ENCODE measurements at regions of chr1 and their contacts with region 1.

Region 1: DNA sequence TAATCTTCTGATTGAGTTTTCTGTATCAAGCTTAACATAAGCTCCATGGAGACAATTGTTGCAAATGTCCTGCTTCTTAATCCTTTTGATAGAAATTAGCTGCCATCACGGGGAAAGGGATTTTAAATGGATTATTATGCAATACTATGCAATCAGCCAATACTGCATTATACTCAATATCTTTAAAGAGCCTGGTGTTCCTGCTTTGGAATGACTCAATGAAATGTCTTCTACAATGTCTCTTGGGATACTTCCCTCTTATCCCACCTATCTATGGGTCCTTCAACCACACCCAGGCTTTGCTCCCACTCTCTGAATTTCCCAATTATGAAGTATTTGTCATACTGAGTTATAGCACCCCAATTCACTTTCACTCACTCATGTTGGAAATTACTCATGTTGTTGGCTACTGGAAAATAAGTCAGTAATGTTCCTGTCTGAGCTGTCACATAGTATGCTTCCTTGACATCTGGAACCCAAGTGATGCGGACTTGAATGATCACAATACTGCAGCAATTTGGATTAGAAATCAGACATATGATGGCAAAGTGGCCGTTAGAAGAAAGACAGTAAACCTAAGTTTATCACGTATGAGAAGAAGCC is 85.0 kb downstream of the TPR start:
- DNase-seq: peak; percentile 55
- H3K4me3 Mint-ChIP-seq: peak overlapping the region; percentile 43
- H3K27ac Mint-ChIP-seq: peak overlapping the region; percentile 99
- H3K4me1 Mint-ChIP-seq: peaks cover 90% of the 10 kb centered on the region
- H3K27me3 Mint-ChIP-seq: no peaks in the 10 kb centered on the region

Region 2: GRCh38 chr1:186009039-186009737 is 280.9 kb before region 1 on chr1:
- CTCF ChIA-PET with region 1: no interaction called
- intact Hi-C with region 1: loop called (anchors 1 kb)
- DNase-seq: no peak
- H3K4me3 Mint-ChIP-seq: no peak overlapping the region
- H3K27ac Mint-ChIP-seq: peak overlapping the region; percentile 53
- H3K4me1 Mint-ChIP-seq: peaks cover 4% of the 10 kb centered on the region
- H3K27me3 Mint-ChIP-seq: no peaks in the 10 kb centered on the region

Region 3: DNA sequence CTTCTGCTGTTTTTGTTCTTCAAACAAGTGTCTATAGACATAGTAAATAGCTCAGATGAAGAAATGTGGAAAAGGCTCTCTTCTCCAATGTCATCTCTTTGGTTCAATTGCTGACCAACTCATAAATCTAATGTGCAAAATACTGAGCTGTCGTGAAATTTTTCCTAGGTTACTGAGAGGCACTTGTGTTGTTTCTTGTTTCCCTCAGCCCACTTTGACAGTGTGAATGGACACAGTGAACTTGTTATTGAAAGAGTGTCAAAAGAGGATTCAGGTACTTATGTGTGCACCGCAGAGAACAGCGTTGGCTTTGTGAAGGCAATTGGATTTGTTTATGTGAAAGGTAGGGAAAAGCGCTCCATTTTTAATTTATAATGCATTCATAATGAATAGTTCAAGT is 160.3 kb before region 1 on chr1:
- CTCF ChIA-PET with region 1: no interaction called
- intact Hi-C with region 1: no loop called
- DNase-seq: no peak
- H3K4me3 Mint-ChIP-seq: no peak overlapping the region
- H3K27ac Mint-ChIP-seq: no peak overlapping the region
- H3K4me1 Mint-ChIP-seq: no peaks in the 10 kb centered on the region
- H3K27me3 Mint-ChIP-seq: peaks cover 7% of the 10 kb centered on the region

Region 4: GRCh38 chr1:186255266-186255665 is 34.8 kb before region 1 on chr1:
- CTCF ChIA-PET with region 1: no interaction called
- intact Hi-C with region 1: no loop called
- DNase-seq: no peak
- H3K4me3 Mint-ChIP-seq: no peak overlapping the region
- H3K27ac Mint-ChIP-seq: no peak overlapping the region
- H3K4me1 Mint-ChIP-seq: no peaks in the 10 kb centered on the region
- H3K27me3 Mint-ChIP-seq: peaks cover 4% of the 10 kb centered on the region

Measured in activated naive CD4-positive, alpha-beta T cell treated with anti-CD3 and anti-CD28 coated beads for 36 hours (primary cell).